ENCODE measurements at regions of chr2 and their contacts with region 1.

Region 1: GRCh38 chr2:218286570-218287459 is 5.5 kb downstream of the TMBIM1 start:
- DNase-seq: peak; percentile 95
- H3K4me3 Mint-ChIP-seq: peak overlapping the region; percentile 86
- H3K27ac Mint-ChIP-seq: peak overlapping the region; percentile 92
- H3K4me1 Mint-ChIP-seq: peaks cover 67% of the 10 kb centered on the region
- H3K27me3 Mint-ChIP-seq: no peaks in the 10 kb centered on the region

Region 2: GRCh38 chr2:218317232-218317630 is 30.4 kb after region 1 on chr2:
- intact Hi-C with region 1: loop called (anchors 2 kb)
- DNase-seq: no peak
- H3K4me3 Mint-ChIP-seq: peak overlapping the region; percentile 10
- H3K27ac Mint-ChIP-seq: peak overlapping the region; percentile 84
- H3K4me1 Mint-ChIP-seq: peaks cover 23% of the 10 kb centered on the region
- H3K27me3 Mint-ChIP-seq: no peaks in the 10 kb centered on the region

Measured in activated CD4-positive, alpha-beta T cell treated with anti-CD3 and anti-CD28 coated beads, Interleukin-2, amount 10 ng/mL, durations not matched to agents 24 days and 14 days (primary cell).